GM18951 (cell line): ENCODE measurements at regions of chr6 and their contacts with region 1.

Region 1: DNA sequence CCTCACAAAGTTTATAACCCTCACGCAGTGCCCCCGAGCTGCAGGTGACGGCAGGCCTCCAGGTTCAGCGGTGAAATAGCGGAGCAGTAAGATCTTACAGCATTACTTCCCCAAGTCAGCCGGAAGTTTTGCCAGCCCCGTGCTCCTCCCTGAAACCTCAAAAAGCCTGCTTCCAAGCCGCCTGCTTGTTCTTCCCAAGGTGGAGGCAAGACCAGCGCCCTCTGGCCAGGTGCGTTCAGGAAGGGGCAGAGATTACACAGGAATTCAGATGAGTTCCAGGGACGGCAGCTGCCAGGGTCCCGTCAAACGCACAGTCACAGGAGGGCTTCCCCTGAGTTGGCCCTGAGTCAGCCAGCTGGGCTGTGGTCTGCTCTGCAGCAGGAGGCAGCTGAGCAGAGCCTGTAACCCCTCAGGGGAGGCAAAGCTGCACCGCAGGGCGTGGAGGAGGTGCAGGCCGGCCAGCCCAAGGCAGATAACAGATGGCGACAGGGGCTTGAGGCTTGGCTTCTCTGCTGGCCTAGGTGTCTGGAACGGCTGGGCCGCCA is 124.1 kb upstream of the RPS6KA2 start:
- POLR2A ChIP-seq: no peak

Region 2: DNA sequence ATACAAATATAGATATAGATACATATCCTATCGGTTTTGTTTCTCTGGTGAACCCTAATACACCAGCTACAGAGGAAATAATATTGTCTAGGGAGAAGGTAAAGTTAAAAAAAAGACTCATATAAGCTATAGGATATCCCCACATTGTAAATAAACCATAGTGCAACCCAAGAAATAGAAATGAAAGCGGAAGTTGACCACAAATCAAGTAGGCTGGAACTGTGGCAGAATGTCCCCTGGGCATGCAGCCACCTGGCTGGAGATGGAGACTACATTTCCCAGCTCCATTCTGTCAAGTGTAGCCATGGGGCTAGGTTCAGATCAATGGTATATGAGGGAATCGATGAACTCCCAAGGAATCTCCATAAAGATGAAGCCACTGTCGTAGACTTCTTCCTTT is 54.0 kb before region 1 on chr6:
- in situ Hi-C with region 1: no loop called
- POLR2A ChIP-seq: no peak

Region 3: DNA sequence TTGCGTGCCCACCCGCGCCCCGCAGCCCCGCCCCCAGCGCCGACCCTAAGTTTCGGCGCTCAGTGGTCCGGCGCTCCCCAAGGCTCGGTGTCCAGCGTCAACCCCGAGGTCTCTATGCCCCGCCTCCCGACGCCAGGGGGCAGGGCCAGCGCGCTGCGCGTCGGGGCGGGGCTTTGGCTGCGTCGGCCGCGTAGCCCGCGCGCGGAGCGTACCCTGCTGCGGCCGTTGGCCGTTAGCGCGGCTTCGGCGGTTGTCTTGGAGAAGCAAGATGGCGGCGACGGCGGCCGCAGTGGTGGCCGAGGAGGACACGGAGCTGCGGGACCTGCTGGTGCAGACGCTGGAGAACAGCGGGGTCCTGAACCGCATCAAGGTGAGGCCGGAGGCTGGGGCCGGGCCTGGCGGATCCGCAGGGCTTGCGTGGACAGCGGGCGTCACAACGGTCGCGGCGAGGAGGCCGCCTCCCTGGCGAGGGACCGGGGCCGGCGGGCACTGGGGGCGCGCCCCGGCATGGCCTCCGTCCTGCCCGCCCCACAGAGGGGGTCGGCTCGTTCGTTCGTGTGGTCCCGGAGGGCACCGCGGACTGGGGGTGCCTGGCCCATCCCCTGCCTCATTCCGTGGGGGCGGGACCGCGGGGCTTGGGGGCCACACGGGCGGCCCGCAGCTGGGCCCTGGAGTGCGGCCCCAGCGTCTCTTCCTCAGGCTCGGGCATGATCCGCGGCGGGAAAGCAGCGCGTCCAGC is 248.2 kb after region 1 on chr6 and contains the start of gene CEP43:
- in situ Hi-C with region 1: no loop called
- POLR2A ChIP-seq: peak; percentile 71

Region 4: DNA sequence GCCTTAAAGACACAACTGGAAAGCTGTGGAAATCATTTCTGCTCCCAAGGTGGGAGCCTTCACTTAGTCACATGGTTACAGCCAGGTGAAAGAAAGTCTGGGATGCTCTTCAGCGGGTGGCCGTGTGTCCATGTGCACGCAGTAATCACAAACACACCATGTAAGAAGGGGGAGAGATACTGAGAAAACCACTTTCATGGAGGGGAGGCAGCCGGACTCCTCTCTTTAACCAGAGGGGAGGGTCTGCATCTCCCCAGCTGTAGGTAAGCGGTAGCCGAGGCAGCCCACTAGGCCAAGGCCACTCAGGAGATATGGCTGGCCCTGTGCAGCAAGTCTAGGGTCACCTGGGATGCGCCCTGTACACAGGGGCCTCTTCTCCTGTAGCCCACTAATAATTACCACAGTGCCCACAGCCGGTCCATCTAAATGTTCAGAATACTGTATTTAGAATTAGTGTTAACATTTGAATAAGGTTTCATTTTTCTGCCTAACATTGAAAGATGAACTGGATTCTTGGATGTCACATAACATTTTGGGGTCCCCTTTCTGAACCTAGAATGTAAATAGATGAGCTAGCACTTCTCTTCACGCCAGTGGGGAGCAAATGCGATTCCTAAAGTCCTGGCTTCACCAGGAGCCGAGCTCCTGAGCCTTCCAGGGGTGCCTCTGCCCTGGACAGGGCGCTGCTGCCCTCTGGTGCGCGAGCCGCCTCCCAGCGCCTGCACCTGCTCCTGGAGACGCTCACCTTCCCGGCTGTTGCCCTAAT is 390.7 kb after region 1 on chr6:
- in situ Hi-C with region 1: loop called (anchors 25 kb)
- POLR2A ChIP-seq: no peak

Region 5: GRCh38 chr6:167350731-167351655 is 599.9 kb after region 1 on chr6:
- in situ Hi-C with region 1: loop called (anchors 25 kb)
- POLR2A ChIP-seq: no peak